ENCODE measurements at regions of chr12 and their contacts with region 1.

Region 1: GRCh38 chr12:22529281-22530060 is 14.9 kb downstream of the C2CD5 start:
- DNase-seq: peak in 1 of 35 experiments; percentile 62
- ATAC-seq: peak; percentile 75 to 89 (median 78)
- H3K4me3 ChIP-seq: no peak overlapping the region
- H3K4me3 Mint-ChIP-seq: no peak overlapping the region
- H3K27ac ChIP-seq: no peak overlapping the region
- H3K27ac Mint-ChIP-seq: no peak overlapping the region
- H3K4me1 ChIP-seq: no peaks in the 10 kb centered on the region
- H3K4me1 Mint-ChIP-seq: peaks cover 11 to 22% (median 13%) of the 10 kb centered on the region in 3 donors
- H3K27me3 ChIP-seq: no peaks in the 10 kb centered on the region
- H3K27me3 Mint-ChIP-seq: no peaks in the 10 kb centered on the region

Region 2: GRCh38 chr12:22215467-22216253 is 313.8 kb before region 1 on chr12:
- CTCF ChIA-PET with region 1: no interaction called
- POLR2A ChIA-PET with region 1: no interaction called
- DNase-seq: no peak
- ATAC-seq: no peak
- H3K4me3 ChIP-seq: no peak overlapping the region
- H3K4me3 Mint-ChIP-seq: no peak overlapping the region
- H3K27ac ChIP-seq: no peak overlapping the region
- H3K27ac Mint-ChIP-seq: no peak overlapping the region
- H3K4me1 ChIP-seq: no peaks in the 10 kb centered on the region
- H3K4me1 Mint-ChIP-seq: no peaks in the 10 kb centered on the region
- H3K27me3 ChIP-seq: no peaks in the 10 kb centered on the region
- H3K27me3 Mint-ChIP-seq: no peaks in the 10 kb centered on the region

Region 3: GRCh38 chr12:22544038-22544979 is 14.8 kb after region 1 on chr12 and contains the start of gene C2CD5:
- CTCF ChIA-PET with region 1: interaction called, 6 to 10 read pairs
- POLR2A ChIA-PET with region 1: interaction called in 1 of 2 experiments, 4 read pairs
- DNase-seq: peak; percentile 89 to 98 (median 95)
- ATAC-seq: peak; percentile 87 to 89 (median 88)
- H3K4me3 ChIP-seq: peak within 1 kb of the TSS; percentile 78 to 92
- H3K4me3 Mint-ChIP-seq: peak within 1 kb of the TSS; percentile 86 to 91 (median 88)
- H3K27ac ChIP-seq: peak within 1 kb of the TSS; percentile 91
- H3K27ac Mint-ChIP-seq: peak within 1 kb of the TSS; percentile 92 to 96
- H3K4me1 ChIP-seq: peaks cover 12 to 30% of the 10 kb centered on the region in 2 experiments
- H3K4me1 Mint-ChIP-seq: peaks cover 42 to 48% (median 45%) of the 10 kb centered on the region in 3 donors
- H3K27me3 ChIP-seq: peaks cover 0 to 4% of the 10 kb centered on the region in 2 experiments
- H3K27me3 Mint-ChIP-seq: peaks cover 0 to 6% of the 10 kb centered on the region in 2 donors
- total RNA-seq, gene C2CD5: 34.6 to 44.9 (median 42.6) TPM

Region 4: GRCh38 chr12:22624870-22625761 is 95.6 kb after region 1 on chr12 and contains the start of gene ETNK1:
- CTCF ChIA-PET with region 1: interaction called, 7 to 40 read pairs
- POLR2A ChIA-PET with region 1: interaction called in 1 of 2 experiments, 5 read pairs
- DNase-seq: peak; percentile 57 to 88 (median 76)
- ATAC-seq: peak; percentile 96 to 99 (median 98)
- H3K4me3 ChIP-seq: peak within 1 kb of the TSS; percentile 84 to 97
- H3K4me3 Mint-ChIP-seq: peak within 1 kb of the TSS; percentile 85 to 99 (median 90)
- H3K27ac ChIP-seq: peak within 1 kb of the TSS; percentile 93
- H3K27ac Mint-ChIP-seq: peak within 1 kb of the TSS; percentile 93 to 96
- H3K4me1 ChIP-seq: peaks cover 8 to 35% of the 10 kb centered on the region in 2 experiments
- H3K4me1 Mint-ChIP-seq: peaks cover 41 to 50% (median 44%) of the 10 kb centered on the region in 3 donors
- H3K27me3 ChIP-seq: peaks cover 0 to 4% of the 10 kb centered on the region in 2 experiments
- H3K27me3 Mint-ChIP-seq: peaks cover 6 to 10% of the 10 kb centered on the region in 2 donors
- total RNA-seq, gene ETNK1: 50.9 to 77.4 (median 69.9) TPM

Region 5: GRCh38 chr12:22670762-22671161 is 141.3 kb after region 1 on chr12:
- CTCF ChIA-PET with region 1: interaction called, 5 to 13 read pairs
- POLR2A ChIA-PET with region 1: no interaction called
- DNase-seq: no peak
- ATAC-seq: no peak
- H3K4me3 ChIP-seq: no peak overlapping the region
- H3K4me3 Mint-ChIP-seq: no peak overlapping the region
- H3K27ac ChIP-seq: no peak overlapping the region
- H3K27ac Mint-ChIP-seq: no peak overlapping the region
- H3K4me1 ChIP-seq: no peaks in the 10 kb centered on the region
- H3K4me1 Mint-ChIP-seq: peaks cover 0 to 9% (median 1%) of the 10 kb centered on the region in 3 donors
- H3K27me3 ChIP-seq: no peaks in the 10 kb centered on the region
- H3K27me3 Mint-ChIP-seq: no peaks in the 10 kb centered on the region

Region 6: DNA sequence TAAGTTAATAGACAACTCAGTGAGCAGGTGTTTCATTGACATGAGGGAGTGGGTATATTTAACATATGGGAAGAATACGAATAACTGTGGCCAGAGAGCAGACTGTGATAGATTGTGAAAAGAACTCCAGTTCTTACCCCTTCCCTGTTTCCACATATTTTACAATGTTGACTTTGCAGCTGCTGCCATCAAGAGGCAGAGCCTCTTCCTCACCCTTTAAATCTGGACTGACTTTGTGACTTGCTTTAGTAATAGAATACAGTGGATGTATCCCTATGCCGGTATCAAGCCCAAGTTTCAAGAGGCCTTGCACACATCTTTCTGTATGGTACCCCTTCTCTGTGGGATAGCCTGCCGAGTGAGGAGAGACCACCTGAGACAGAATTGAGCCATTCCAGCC is 452.2 kb after region 1 on chr12:
- CTCF ChIA-PET with region 1: interaction called in 1 of 2 experiments, 11 read pairs
- POLR2A ChIA-PET with region 1: no interaction called
- DNase-seq: no peak
- ATAC-seq: no peak
- H3K4me3 ChIP-seq: no peak overlapping the region
- H3K4me3 Mint-ChIP-seq: no peak overlapping the region
- H3K27ac ChIP-seq: no peak overlapping the region
- H3K27ac Mint-ChIP-seq: no peak overlapping the region
- H3K4me1 ChIP-seq: no peaks in the 10 kb centered on the region
- H3K4me1 Mint-ChIP-seq: no peaks in the 10 kb centered on the region
- H3K27me3 ChIP-seq: no peaks in the 10 kb centered on the region
- H3K27me3 Mint-ChIP-seq: no peaks in the 10 kb centered on the region